PC-3 (cell line): ENCODE measurements at regions of chr1 and their contacts with region 1.

Region 1: GRCh38 chr1:64469977-64470664 is at the start of gene CACHD1:
- DNase-seq: peak; percentile 75
- ATAC-seq: peak; percentile 81
- H3K4me3 ChIP-seq: peak within 1 kb of the TSS; percentile 89
- H3K27ac ChIP-seq: no peak within 1 kb of the TSS
- H3K4me1 ChIP-seq: peaks cover 25% of the 10 kb centered on the region
- H3K27me3 ChIP-seq: no peaks in the 10 kb centered on the region
- CTCF ChIP-seq: no peak
- total RNA-seq, gene CACHD1: 6.6 TPM in 2 replicates

Region 2: DNA sequence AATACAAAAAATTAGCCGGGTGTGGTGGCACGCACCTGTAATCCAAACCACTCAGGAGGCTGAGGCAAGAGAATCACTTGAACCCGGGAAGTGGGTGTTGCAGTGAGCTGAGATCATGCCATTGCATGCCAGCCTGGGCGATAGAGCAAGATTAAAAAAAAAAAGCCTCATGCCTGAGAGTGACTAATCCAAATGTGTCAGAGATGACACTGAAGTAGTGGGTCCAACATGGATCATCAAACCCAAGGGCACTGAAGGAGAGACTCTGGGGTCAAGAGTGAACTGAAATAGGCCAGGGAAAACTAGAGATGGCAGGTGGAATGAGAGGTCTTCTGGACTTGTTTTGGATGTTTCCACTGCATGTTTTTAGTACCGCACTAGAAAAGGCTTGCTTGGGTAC is 10.4 kb before region 1 on chr1:
- CTCF ChIA-PET with region 1: no interaction called
- POLR2A ChIA-PET with region 1: no interaction called
- intact Hi-C with region 1: no loop called
- DNase-seq: no peak
- ATAC-seq: no peak
- H3K4me3 ChIP-seq: no peak overlapping the region
- H3K27ac ChIP-seq: no peak overlapping the region
- H3K4me1 ChIP-seq: no peaks in the 10 kb centered on the region
- H3K27me3 ChIP-seq: no peaks in the 10 kb centered on the region
- CTCF ChIP-seq: no peak

Region 3: DNA sequence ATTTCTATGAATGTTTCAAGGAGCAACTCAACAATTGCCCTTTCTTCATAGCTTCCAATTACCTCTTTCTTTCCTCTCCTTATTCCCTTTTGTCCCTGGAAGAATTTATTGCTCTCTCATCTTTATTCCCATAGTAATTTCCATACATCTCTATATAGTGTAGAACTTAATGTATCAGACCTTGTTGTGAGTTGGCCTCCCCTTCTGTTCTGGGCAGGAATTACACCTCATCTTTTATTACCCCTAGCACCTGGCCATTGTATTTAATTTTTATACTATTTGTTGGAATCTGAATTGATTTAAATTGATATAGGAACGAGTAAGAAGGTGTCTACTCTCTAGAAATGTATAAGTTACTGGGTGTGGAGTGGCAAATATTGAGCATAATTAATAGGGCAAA is 114.4 kb after region 1 on chr1:
- CTCF ChIA-PET with region 1: no interaction called
- POLR2A ChIA-PET with region 1: no interaction called
- intact Hi-C with region 1: loop called (anchors 5 kb)
- DNase-seq: peak; percentile 39
- ATAC-seq: no peak
- H3K4me3 ChIP-seq: no peak overlapping the region
- H3K27ac ChIP-seq: no peak overlapping the region
- H3K4me1 ChIP-seq: no peaks in the 10 kb centered on the region
- H3K27me3 ChIP-seq: no peaks in the 10 kb centered on the region
- CTCF ChIP-seq: peak; percentile 73

Region 4: GRCh38 chr1:64686828-64687724 is 217.0 kb after region 1 on chr1:
- CTCF ChIA-PET with region 1: no interaction called
- POLR2A ChIA-PET with region 1: no interaction called
- intact Hi-C with region 1: loop called (anchors 5 kb)
- DNase-seq: peak; percentile 76
- ATAC-seq: peak; percentile 81
- H3K4me3 ChIP-seq: peak overlapping the region; percentile 25; the same call in 1 of the 2 replicates
- H3K27ac ChIP-seq: peak overlapping the region; percentile 70
- H3K4me1 ChIP-seq: peaks cover 28% of the 10 kb centered on the region
- H3K27me3 ChIP-seq: no peaks in the 10 kb centered on the region
- CTCF ChIP-seq: peak; percentile 90

Region 5: DNA sequence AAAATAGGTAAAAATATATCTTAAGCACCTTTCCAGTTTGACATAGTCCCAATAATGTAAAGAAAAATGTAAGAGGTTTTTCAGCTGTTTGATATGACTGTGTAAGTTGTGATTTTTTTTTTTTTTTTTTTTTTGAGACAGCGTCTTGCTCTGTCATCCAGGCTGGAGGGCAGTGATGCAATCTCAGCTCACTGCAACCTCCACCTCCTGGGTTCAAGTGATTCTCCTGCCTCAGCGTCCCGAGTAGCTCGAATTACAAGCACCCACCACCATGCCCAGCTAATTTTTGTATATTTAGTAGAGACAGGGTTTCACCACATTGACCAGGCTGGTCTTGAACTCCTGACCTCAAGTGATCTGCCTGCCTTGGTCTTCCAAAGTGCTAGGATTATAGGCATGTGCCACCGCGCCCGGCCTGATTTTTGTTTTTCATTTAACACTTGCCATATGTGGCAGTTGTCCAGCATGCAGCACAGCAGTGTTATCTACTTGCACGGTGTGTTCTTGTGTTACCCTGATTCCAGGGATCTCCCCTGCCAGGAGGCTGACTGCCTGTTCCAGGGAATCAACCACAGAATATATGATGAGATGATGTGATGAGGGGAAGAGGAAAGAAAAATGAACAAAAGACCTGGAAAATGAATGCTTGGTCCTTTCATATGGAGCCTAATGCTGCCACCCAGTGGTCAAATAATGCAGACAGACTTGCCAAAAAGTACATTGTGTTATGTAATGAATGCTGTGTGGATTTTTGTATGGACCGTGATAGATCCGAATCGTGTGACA is 353.8 kb after region 1 on chr1:
- CTCF ChIA-PET with region 1: no interaction called
- POLR2A ChIA-PET with region 1: no interaction called
- intact Hi-C with region 1: loop called (anchors 5 kb)
- DNase-seq: peak; percentile 84
- ATAC-seq: peak; percentile 73
- H3K4me3 ChIP-seq: no peak overlapping the region
- H3K27ac ChIP-seq: no peak overlapping the region
- H3K4me1 ChIP-seq: no peaks in the 10 kb centered on the region
- H3K27me3 ChIP-seq: no peaks in the 10 kb centered on the region
- CTCF ChIP-seq: peak; percentile 93